Activated CD4-positive, alpha-beta T cell treated with anti-CD3 and anti-CD28 coated beads, Interleukin-2, amount 10 ng/mL, durations not matched to agents 7 days and 5 days (primary cell): ENCODE measurements at regions of chr22 and their contacts with region 1.

Region 1: DNA sequence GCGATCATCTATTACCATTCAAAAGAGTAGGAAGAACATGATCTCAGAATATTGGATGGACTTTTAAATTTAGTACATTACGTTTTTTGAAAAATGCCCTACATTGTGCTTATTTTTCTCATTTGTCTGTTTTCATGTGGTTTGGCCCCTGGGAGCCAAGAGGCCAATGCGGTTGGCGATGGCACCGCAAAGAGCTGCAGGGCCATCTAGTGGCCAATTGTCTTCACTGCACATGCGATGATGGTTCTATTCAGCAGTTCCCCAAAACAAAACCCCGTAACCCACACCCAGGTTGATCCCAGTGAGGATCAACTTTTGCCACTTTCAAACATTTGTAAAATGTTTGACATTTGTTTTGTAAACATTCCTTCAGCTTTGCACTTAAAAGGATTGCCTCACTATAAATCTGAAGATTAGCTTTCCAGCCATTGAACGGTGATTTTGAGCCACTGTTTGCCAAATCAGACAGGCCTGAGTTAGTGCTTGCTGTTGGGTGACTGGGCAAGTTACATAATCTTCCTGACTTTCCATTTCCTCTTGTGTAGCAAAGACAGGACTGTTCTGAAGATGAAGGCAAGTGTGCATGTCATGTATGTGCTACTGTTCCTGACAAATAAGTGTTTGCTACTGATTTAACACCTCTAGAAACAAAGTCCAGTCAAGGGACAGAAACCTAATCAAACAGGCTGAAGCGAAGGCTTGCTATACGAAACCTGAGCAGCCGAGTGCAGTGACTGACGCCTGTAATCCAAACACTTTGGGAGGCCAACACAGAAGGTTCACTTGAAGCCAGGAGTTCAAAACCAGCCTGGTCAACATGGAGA is 29.2 kb upstream of the XBP1 start:
- DNase-seq: peak; percentile 82
- H3K4me3 Mint-ChIP-seq: no peak overlapping the region
- H3K27ac Mint-ChIP-seq: peak overlapping the region; percentile 68
- H3K4me1 Mint-ChIP-seq: peaks cover 46% of the 10 kb centered on the region
- H3K27me3 Mint-ChIP-seq: no peaks in the 10 kb centered on the region

Region 2: DNA sequence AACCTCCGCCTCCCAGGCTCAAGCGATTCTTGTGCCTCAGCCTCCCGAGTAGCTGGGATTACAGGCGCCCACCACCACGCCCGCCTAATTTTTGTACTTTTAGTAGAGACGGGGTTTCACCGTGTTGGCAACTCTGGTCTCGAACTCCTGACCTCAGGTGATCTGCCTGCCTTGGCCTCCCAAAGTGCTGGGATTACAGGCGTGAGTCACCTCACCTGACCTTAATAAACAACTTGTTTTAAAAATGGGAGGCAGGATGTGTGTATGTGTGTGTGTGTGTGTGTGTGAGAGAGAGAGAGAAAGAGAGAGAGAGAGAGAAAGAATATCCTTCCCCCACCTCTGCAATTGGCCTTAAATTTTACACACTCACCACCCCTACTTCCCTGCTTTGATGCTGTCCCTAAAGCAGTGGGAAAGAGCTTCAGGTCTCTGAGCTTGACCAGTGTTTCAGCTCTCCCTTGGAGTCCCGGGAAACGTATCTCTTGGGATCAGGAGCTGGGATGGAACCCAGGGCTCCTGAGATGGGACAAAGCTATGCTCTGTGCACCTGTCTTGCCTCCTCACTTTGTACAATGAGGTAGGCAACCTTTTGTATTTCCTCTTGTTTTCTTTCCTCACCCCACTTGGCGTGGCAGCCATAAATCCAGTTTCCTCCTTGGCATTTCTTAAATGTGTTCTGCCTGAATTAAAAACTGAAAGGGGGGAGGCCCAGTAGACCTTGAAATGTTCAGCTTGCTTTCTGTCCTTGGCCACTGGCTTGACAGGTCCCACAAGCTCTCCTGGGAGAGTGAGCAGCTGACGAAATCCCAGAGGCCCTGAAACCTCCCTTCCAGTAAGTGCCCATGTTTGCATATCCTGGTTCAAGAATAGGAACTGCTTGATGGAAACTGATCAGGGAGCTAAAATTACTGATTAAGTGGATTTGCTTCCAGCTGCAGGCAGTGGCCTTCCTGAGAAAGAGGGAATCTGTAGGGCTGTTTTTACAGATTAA is 11.4 kb before region 1 on chr22:
- CTCF ChIA-PET with region 1: interaction called, 18 read pairs
- POLR2A ChIA-PET with region 1: no interaction called
- DNase-seq: no peak
- H3K4me3 Mint-ChIP-seq: peak overlapping the region; percentile 18
- H3K27ac Mint-ChIP-seq: peak overlapping the region; percentile 76
- H3K4me1 Mint-ChIP-seq: peaks cover 83% of the 10 kb centered on the region
- H3K27me3 Mint-ChIP-seq: no peaks in the 10 kb centered on the region

Region 3: DNA sequence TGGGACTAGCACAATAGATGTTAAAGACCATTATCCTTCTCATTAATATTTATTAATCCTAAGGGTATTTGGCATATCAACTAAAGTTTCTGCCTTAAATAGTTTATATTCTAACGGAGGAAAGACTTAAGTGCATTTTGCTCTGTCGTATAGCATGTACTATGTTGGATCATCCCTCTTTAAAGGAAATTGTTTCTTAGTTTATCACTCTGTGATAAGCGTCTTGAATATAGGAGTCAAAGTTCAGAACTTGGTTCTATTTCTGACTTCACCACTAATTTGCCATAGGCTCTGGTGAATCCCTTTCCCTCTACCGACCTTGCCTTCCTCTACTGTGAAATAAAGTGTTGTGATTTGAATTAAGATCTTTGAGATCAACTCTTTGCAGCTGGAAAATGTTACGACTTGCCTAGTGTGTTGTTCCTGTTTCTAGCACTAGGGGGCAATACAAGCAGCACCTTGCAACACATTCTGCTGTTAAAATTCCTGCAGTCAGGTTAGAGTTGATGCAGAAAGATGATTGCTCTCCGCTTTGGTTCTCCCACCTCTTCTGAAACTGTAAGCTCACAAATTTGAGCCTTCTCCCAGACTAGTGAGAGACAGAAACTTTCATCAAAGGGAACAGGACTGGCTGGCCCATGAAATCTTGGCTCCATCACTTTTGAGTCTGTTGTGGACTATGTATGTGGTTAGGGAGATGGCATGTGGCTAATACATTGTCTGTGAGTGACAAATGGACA is 26.0 kb after region 1 on chr22:
- CTCF ChIA-PET with region 1: no interaction called
- POLR2A ChIA-PET with region 1: no interaction called
- DNase-seq: peak; percentile 62
- H3K4me3 Mint-ChIP-seq: no peak overlapping the region
- H3K27ac Mint-ChIP-seq: no peak overlapping the region
- H3K4me1 Mint-ChIP-seq: no peaks in the 10 kb centered on the region
- H3K27me3 Mint-ChIP-seq: peaks cover 11% of the 10 kb centered on the region

Region 4: GRCh38 chr22:28899199-28899853 is 69.8 kb after region 1 on chr22:
- CTCF ChIA-PET with region 1: no interaction called
- POLR2A ChIA-PET with region 1: no interaction called
- DNase-seq: peak; percentile 57
- H3K4me3 Mint-ChIP-seq: no peak overlapping the region
- H3K27ac Mint-ChIP-seq: no peak overlapping the region
- H3K4me1 Mint-ChIP-seq: peaks cover 16% of the 10 kb centered on the region
- H3K27me3 Mint-ChIP-seq: peaks cover 33% of the 10 kb centered on the region